Ascending aorta (tissue), 2 donors: ENCODE measurements at regions of chr19 and their contacts with region 1.

Region 1: GRCh38 chr19:14383661-14384555 is 2.7 kb downstream of the ADGRE5 start:
- DNase-seq: no peak
- H3K4me3 ChIP-seq: peak overlapping the region; percentile 71 to 92
- H3K27ac ChIP-seq: peak overlapping the region; percentile 96 to 97
- H3K4me1 ChIP-seq: peaks cover 3 to 32% of the 10 kb centered on the region in 2 donors
- H3K27me3 ChIP-seq: no peaks in the 10 kb centered on the region
- CTCF ChIP-seq: no peak

Region 2: DNA sequence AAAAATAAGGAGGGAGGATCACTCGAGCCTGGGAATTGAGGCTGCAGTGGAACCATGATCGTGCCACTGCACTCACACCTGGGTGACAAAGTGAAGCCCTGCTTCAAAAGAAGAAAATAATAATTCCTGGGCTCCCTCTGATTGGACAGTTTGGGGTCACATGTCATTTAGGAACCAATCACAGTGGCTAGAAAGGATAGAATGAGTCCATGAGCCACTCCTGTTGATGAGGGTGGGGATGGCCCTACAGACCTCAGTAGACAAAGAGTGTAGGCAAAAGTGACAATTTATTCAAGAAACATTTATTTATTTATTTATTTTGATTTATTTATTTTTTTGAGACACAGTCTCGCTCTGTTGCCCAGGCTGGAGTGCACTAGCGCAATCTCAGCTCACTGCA is 29.5 kb before region 1 on chr19:
- intact Hi-C with region 1: no loop called
- DNase-seq: no peak
- H3K4me3 ChIP-seq: no peak overlapping the region
- H3K27ac ChIP-seq: no peak overlapping the region
- H3K4me1 ChIP-seq: no peaks in the 10 kb centered on the region
- H3K27me3 ChIP-seq: no peaks in the 10 kb centered on the region
- CTCF ChIP-seq: no peak

Region 3: GRCh38 chr19:14405758-14406644 is 22.1 kb after region 1 on chr19:
- intact Hi-C with region 1: loop called (anchors 2 kb)
- DNase-seq: peak; percentile 31 to 89
- H3K4me3 ChIP-seq: no peak overlapping the region
- H3K27ac ChIP-seq: peak overlapping the region; percentile 71 to 75
- H3K4me1 ChIP-seq: peaks cover 2 to 8% of the 10 kb centered on the region in 2 donors
- H3K27me3 ChIP-seq: no peaks in the 10 kb centered on the region
- CTCF ChIP-seq: peak; percentile 90 to 97 (median 94)